ENCODE measurements at regions of chr20 and their contacts with region 1.

Region 1: GRCh38 chr20:5504061-5504739 is 187.4 kb upstream of the PROKR2 start:
- DNase-seq: peak; percentile 13
- ATAC-seq: peak; percentile 26
- H3K4me3 Mint-ChIP-seq: peak overlapping the region; percentile 26
- H3K27ac Mint-ChIP-seq: no peak overlapping the region
- H3K4me1 Mint-ChIP-seq: peaks cover 6% of the 10 kb centered on the region
- H3K27me3 Mint-ChIP-seq: peaks cover 6% of the 10 kb centered on the region

Region 2: DNA sequence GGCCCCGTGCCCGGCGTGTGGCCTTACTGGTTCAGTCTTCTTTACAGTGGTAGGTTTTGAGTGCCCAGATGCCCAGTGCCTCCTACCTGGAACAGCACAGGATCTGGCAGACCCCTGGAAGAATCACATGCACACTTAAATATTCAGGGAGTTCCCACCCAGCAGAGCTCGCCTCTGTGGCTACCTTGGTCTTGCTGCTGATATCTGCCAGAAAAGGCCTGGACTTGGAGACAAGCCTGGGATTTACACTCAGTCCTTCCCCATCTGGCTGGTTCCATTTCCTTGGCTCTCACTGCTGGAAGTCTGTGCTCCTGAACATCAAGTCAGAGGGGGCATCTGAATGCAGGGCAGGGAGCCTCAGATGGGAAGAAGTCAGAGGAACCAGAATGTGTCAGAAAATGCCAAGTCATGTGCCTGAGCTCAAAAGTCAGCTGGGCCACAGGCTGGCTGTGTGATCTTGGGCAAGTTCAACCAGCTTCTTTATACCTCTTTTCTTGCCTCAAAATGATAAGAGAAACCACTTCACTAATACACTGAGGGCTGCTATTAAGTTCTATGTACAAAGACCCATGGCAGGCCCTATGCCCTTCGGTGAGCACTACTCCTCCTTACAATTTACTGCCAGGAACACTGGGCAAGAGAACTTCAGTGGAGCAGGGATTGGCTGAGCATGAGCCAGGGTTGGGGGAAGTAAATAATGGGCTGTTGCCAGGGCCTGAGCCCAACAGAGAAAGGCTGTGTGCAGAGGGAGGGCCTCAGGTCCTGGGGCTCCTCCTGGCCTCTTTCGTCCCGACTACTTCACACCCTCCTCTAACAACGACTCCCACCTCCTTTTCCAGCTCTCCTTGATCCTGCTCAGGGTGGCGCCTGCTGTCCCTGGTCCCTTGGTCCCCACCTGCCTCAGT is 29.3 kb before region 1 on chr20:
- CTCF ChIA-PET with region 1: no interaction called
- POLR2A ChIA-PET with region 1: no interaction called
- intact Hi-C with region 1: loop called in 1 of 2 experiments (anchors 2 kb)
- DNase-seq: no peak
- ATAC-seq: no peak
- H3K4me3 Mint-ChIP-seq: no peak overlapping the region
- H3K27ac Mint-ChIP-seq: no peak overlapping the region
- H3K4me1 Mint-ChIP-seq: peaks cover 2% of the 10 kb centered on the region
- H3K27me3 Mint-ChIP-seq: no peaks in the 10 kb centered on the region